Activated T-helper 2 cell treated with anti-CD3 and anti-CD28 coated beads, Interferon-gamma antibody, Interleukin-2, Interleukin-4, amounts not matched to agents 10 μg/mL and 5 μg/mL and 100 μg/mL, durations not matched to agents 14 hours and 24 hours and 36 hours (primary cell): ENCODE measurements at regions of chr2 and their contacts with region 1.

Region 1: DNA sequence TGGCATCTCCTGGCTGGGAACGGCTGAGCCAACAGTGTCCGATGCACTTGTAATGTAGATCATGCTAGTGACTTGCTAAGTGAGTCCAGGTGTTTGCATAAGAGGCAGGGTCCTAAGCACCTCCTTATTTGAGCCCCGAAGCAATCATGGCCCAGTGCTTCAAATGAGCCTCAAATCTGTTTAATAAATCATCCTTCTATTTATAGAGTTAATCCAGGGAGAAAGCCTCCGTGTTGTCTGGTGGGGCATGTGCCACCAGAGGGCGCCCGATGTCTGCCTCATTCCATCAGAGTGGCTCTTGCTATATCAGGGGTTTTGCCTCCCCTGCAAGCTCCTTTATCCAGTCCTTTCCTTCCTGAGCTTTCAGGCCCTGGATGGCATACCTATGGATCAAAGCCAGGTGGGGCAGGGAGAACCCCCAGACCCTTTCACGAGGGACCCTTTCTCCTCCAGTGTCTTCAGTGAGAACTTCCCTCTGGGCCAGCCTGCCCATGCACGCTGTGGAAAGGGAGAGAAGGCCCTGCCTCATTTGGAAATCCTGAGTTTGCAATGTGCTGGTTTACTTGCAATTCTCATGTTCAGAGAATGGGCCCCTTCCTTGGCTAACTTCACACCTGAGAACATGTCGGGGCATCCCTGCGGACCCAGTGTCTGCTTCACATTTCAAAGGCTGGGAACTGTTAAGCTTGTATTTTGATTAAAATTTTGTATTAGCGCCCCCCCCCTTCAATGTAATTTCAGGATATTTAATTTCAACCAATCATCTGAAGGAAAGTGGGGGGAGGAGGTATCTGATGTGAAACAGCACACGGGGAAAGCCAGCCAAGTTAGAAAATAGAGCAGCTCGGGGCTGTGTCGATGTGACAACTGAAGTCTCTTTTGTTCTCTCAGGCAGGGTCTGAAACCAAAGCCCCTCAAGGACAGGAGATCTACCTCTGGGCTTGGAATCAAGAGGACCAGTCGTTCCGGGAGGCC is 39.7 kb downstream of the RDH14 start:
- DNase-seq: peak; percentile 47
- H3K4me3 Mint-ChIP-seq: no peak overlapping the region
- H3K27ac Mint-ChIP-seq: no peak overlapping the region
- H3K4me1 Mint-ChIP-seq: no peaks in the 10 kb centered on the region
- H3K27me3 Mint-ChIP-seq: peaks cover 2% of the 10 kb centered on the region

Region 2: GRCh38 chr2:18560031-18560796 is 39.5 kb after region 1 on chr2 and contains the start of gene RDH14:
- intact Hi-C with region 1: loop called (anchors 2 kb)
- DNase-seq: peak; percentile 86
- H3K4me3 Mint-ChIP-seq: peak within 1 kb of the TSS; percentile 88
- H3K27ac Mint-ChIP-seq: peak within 1 kb of the TSS; percentile 90
- H3K4me1 Mint-ChIP-seq: peaks cover 31% of the 10 kb centered on the region
- H3K27me3 Mint-ChIP-seq: no peaks in the 10 kb centered on the region
- total RNA-seq, gene RDH14: 12.4 and 15.2 TPM in 2 replicates

Region 3: DNA sequence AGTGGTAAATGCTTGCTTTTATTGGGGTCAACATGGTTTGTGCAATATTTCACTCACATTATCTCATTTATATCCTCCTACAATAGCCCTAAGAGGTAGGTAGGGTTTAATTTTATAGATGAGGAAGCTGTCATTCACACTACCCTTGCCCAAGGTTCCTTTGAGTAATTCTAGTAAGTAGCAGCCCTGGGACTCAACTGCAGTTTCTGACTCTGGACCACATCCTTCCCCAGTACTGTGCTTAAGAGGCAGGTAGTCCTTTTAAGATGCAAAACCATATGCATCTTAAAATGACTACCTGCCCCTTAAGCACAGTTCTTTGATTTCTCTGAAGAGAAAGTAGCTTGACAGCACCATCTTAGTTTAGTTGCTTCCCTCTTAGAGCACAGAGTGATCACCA is 84.4 kb after region 1 on chr2:
- intact Hi-C with region 1: loop called (anchors 5 kb)
- DNase-seq: no peak
- H3K4me3 Mint-ChIP-seq: no peak overlapping the region
- H3K27ac Mint-ChIP-seq: no peak overlapping the region
- H3K4me1 Mint-ChIP-seq: peaks cover 14% of the 10 kb centered on the region
- H3K27me3 Mint-ChIP-seq: no peaks in the 10 kb centered on the region

Region 4: DNA sequence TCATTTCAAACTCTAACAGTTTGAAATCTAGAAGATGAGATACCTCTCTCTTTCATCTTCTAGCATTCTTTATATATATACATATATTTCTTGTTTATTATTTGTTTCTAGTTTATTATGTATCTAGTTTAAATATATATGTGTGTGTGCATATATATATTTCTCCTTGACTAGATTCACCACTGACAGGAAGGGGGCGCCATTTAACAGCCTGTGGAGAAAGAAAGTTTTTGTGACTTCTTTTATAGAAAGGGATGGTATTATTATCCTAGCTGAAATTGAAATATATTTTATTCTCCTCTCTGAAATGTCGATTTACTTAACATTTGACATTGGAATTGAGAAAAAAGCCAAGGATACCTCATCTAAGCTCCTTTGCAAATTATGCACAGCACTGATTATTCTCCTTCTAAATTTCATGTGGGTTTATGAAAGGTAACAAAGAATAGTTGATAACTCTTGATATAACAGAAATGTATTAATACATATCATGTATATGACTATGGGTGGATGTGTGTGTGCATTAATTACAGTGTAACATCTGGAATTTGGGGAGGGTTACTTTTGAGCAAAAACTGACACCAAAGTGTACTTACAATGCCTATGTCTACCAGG is 229.3 kb after region 1 on chr2:
- intact Hi-C with region 1: loop called (anchors 5 kb)
- DNase-seq: no peak
- H3K4me3 Mint-ChIP-seq: no peak overlapping the region
- H3K27ac Mint-ChIP-seq: no peak overlapping the region
- H3K4me1 Mint-ChIP-seq: no peaks in the 10 kb centered on the region
- H3K27me3 Mint-ChIP-seq: no peaks in the 10 kb centered on the region